ENCODE measurements at regions of chr10 and their contacts with region 1.

Region 1: DNA sequence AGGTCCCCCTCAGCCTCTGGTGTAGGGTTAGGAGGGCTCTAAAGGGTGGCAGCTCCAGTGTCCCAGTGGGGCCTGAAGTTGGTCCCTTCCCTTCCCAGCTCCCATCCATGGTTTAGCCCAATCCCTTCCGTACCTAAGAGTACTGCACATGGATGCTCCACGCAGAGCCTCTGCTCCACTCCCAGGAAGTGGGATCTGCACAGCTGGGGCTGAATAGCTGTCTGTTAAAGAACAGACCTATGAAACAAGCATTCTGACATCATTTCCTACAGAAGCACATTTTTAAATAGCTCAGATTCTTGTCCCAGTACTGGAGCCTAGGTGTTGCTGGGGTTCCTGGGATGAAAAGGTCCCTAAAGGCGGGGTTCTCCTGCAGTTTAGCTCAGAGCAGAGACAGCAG is 135.9 kb downstream of the ZMYND11 start:
- DNase-seq: no peak
- H3K4me3 ChIP-seq: no peak overlapping the region
- H3K27ac ChIP-seq: no peak overlapping the region
- H3K4me1 ChIP-seq: peaks cover 0 to 5% (median 3%) of the 10 kb centered on the region in 4 experiments; a peak in 3 of 7 replicates
- H3K27me3 ChIP-seq: no peaks in the 10 kb centered on the region; a peak in 1 of 7 replicates
- CTCF ChIP-seq: no peak
- EP300 ChIP-seq: no peak
- POLR2A ChIP-seq: no peak
- RAD21 ChIP-seq: no peak

Region 2: DNA sequence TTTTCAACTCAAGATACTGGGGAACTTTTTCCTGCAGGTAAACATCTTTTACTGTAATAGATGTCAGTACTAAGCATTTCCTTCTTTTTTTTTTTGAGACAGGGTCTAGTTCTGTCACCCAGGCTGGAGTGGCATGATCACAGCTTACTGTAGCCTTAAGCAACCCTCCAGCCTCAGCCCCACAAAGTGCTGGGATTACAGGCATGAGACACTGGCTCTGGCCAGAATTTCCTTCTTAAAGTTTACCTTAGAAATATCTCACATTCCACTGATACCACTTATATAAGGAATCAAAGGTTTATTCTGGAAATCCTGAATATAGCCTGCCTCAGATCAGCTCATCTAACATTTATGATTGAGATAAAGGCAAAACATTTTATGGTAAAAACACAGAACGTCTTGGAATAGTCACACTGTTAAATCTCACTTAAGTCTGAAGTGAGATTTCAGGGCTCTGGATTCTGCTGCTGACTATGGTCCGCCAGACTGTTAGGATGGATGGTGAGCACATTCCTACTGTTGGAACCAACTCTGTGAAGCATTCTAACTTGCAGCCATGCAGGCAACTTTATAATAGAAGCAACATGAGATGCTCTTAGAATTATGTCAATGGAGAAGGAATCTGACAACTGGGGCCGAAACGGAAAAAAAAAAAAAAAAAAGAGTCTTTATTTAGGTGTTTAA is 16.0 kb after region 1 on chr10:
- CTCF ChIA-PET with region 1: interaction called, 10 read pairs
- POLR2A ChIA-PET with region 1: no interaction called
- DNase-seq: no peak
- H3K4me3 ChIP-seq: no peak overlapping the region
- H3K27ac ChIP-seq: no peak overlapping the region
- H3K4me1 ChIP-seq: peaks cover 0 to 2% (median 0%) of the 10 kb centered on the region in 4 experiments; a peak in 1 of 7 replicates
- H3K27me3 ChIP-seq: no peaks in the 10 kb centered on the region
- CTCF ChIP-seq: no peak
- EP300 ChIP-seq: no peak
- POLR2A ChIP-seq: no peak
- RAD21 ChIP-seq: no peak